Caco-2 (cell line): ENCODE measurements at regions of chr12 and their contacts with region 1.

Region 1: GRCh38 chr12:63843721-63844390 is 644 bp upstream of the SRGAP1 start:
- DNase-seq: peak; percentile 95
- H3K4me3 ChIP-seq: peak overlapping the region; percentile 91
- H3K4me3 Mint-ChIP-seq: peak overlapping the region; percentile 100
- H3K27ac Mint-ChIP-seq: peak overlapping the region; percentile 94
- H3K4me1 ChIP-seq: peaks cover 22% of the 10 kb centered on the region
- H3K4me1 Mint-ChIP-seq: peaks cover 15% of the 10 kb centered on the region
- H3K27me3 ChIP-seq: no peaks in the 10 kb centered on the region
- H3K27me3 Mint-ChIP-seq: no peaks in the 10 kb centered on the region
- CTCF ChIP-seq: peak; percentile 90 to 97

Region 2: GRCh38 chr12:63876980-63877379 is 33.1 kb after region 1 on chr12:
- CTCF ChIA-PET with region 1: no interaction called
- POLR2A ChIA-PET with region 1: no interaction called
- intact Hi-C with region 1: no loop called
- DNase-seq: no peak
- H3K4me3 ChIP-seq: no peak overlapping the region
- H3K4me3 Mint-ChIP-seq: no peak overlapping the region
- H3K27ac Mint-ChIP-seq: no peak overlapping the region
- H3K4me1 ChIP-seq: peaks cover 27% of the 10 kb centered on the region
- H3K4me1 Mint-ChIP-seq: peaks cover 18% of the 10 kb centered on the region
- H3K27me3 ChIP-seq: no peaks in the 10 kb centered on the region
- H3K27me3 Mint-ChIP-seq: no peaks in the 10 kb centered on the region
- CTCF ChIP-seq: no peak

Region 3: DNA sequence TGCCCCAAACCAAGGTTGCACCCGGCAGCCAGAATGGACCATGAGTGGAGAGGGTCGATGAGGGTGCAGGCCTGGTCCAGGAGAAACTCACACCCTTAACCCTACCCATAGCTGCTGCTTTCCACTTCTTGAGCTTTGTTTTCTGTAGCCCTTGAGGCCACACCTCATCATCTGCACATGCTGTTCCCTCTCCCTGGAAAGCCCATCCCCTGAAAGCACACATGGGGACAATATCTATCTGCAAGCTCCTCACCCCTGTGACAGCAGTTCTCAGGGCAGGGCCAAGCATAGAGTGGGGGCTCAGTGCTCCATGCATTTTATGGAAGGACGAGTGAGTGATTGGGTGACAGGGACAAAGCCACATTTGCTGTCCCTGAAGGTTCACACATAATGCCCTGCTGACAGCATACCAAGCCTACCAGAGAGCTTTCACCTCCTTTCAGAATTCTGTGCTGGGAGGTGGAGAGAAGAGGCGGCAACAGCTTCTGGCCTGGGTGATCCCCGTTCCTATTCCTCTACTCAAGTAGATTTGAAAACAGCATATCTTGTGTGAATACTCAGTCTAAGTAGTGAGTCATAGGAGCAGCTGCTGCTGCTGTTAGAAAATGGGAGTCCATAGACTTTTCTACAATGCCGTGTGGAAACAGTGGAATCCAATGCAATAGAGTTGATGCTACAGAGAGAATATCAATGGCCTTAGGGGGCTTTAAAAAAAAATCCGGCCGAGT is 45.2 kb after region 1 on chr12:
- CTCF ChIA-PET with region 1: interaction called, 4 read pairs
- POLR2A ChIA-PET with region 1: no interaction called
- intact Hi-C with region 1: loop called (anchors 1 kb)
- DNase-seq: no peak
- H3K4me3 ChIP-seq: no peak overlapping the region
- H3K4me3 Mint-ChIP-seq: no peak overlapping the region
- H3K27ac Mint-ChIP-seq: peak overlapping the region; percentile 74
- H3K4me1 ChIP-seq: peaks cover 39% of the 10 kb centered on the region
- H3K4me1 Mint-ChIP-seq: peaks cover 43% of the 10 kb centered on the region
- H3K27me3 ChIP-seq: no peaks in the 10 kb centered on the region
- H3K27me3 Mint-ChIP-seq: no peaks in the 10 kb centered on the region
- CTCF ChIP-seq: no peak

Region 4: DNA sequence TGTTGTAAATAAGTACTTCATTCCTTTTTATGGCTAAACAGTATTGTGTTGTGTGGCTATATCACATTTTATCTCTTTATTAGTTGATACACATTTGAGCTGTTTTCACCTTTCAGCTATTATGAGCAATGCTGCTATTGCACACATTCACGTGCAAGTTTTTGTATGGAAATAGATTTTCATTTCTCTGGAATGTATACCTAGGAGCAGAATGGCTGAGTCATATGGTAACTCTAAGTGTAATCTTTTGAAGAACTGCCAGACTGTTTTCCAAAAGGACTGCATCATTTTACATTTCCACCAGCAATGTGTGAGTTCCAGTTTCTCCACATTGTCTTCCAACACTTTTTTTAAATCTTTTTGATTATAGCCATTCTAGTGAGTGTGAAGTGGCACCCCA is 134.7 kb after region 1 on chr12:
- CTCF ChIA-PET with region 1: no interaction called
- POLR2A ChIA-PET with region 1: no interaction called
- intact Hi-C with region 1: loop called (anchors 5 kb)
- DNase-seq: no peak
- H3K4me3 ChIP-seq: no peak overlapping the region
- H3K4me3 Mint-ChIP-seq: no peak overlapping the region
- H3K27ac Mint-ChIP-seq: no peak overlapping the region
- H3K4me1 ChIP-seq: peaks cover 21% of the 10 kb centered on the region
- H3K4me1 Mint-ChIP-seq: peaks cover 11% of the 10 kb centered on the region
- H3K27me3 ChIP-seq: no peaks in the 10 kb centered on the region
- H3K27me3 Mint-ChIP-seq: no peaks in the 10 kb centered on the region
- CTCF ChIP-seq: no peak

Region 5: DNA sequence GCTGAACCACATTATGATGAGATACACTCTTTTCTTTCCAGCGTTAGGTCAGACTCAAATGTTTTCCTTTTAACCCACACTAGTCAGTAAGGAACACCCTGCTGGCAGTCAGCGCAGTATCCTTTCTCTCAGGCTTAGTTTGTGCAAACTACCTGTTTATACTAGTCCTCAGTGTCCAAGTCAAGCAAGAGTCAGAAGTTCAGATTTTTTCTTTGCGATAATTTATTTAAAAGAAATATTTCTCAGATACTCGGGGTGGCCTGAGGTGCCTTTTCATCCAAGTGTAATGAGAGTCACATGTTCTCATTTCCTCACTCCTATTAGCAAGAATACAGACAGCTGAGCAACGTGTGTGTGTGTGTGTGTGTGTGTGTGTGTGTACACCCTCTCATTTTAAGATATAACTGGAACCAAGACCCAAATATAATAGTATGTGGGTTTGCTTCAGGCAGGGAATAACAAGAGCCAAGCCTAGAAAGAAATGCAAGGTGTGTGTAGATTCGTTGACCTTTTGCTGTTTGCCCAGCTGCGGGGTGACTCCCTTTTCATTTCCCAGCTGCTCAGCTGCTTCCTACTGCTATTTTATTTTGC is 195.5 kb after region 1 on chr12:
- CTCF ChIA-PET with region 1: no interaction called
- POLR2A ChIA-PET with region 1: no interaction called
- intact Hi-C with region 1: loop called (anchors 1 kb)
- DNase-seq: peak; percentile 42 to 52
- H3K4me3 ChIP-seq: no peak overlapping the region
- H3K4me3 Mint-ChIP-seq: peak overlapping the region; percentile 9
- H3K27ac Mint-ChIP-seq: peak overlapping the region; percentile 24
- H3K4me1 ChIP-seq: peaks cover 48% of the 10 kb centered on the region
- H3K4me1 Mint-ChIP-seq: peaks cover 38% of the 10 kb centered on the region
- H3K27me3 ChIP-seq: no peaks in the 10 kb centered on the region
- H3K27me3 Mint-ChIP-seq: no peaks in the 10 kb centered on the region
- CTCF ChIP-seq: no peak

Region 6: DNA sequence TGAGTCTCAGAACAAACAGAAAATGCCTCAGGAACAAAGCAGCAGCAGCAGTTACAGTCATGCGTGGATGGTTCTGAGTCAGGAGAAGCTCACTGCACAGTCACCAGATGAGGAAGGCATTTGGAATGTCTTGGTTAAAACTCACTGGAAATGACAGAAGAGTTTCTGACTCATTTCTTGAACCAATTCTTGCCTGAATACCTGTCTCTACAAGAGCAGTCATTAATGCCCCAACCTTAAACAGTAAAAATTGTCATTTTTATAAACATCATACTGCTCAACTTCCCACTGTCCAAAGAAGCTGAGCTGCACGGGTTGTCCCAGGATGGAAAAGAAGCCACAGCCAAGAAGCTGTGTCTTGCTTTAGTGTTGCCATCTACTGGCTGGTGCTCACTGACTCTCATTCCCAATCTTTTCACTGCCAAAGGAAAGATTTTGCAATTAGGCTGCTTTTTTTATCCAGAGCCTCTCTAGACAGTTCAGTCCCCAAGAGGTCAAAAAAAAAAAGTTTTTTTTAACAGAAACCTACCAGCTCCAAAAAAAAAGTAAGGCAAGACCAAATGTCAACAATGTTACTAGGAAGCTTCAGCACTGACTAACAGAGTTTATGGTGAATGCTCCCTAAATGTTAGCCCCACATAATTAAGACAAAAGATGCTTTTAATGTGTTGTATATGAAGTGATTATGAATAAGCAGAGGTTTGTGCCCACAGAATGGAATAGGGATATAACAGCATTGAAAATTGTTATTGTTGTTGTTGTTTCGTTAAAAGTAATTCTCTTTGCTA is 337.8 kb after region 1 on chr12:
- CTCF ChIA-PET with region 1: interaction called, 23 read pairs
- POLR2A ChIA-PET with region 1: no interaction called
- intact Hi-C with region 1: loop called (anchors 1 kb)
- DNase-seq: peak; percentile 53 to 58
- H3K4me3 ChIP-seq: no peak overlapping the region
- H3K4me3 Mint-ChIP-seq: no peak overlapping the region
- H3K27ac Mint-ChIP-seq: peak overlapping the region; percentile 55
- H3K4me1 ChIP-seq: peaks cover 35% of the 10 kb centered on the region
- H3K4me1 Mint-ChIP-seq: peaks cover 34% of the 10 kb centered on the region
- H3K27me3 ChIP-seq: no peaks in the 10 kb centered on the region
- H3K27me3 Mint-ChIP-seq: no peaks in the 10 kb centered on the region
- CTCF ChIP-seq: peak; percentile 59 to 67

Region 7: DNA sequence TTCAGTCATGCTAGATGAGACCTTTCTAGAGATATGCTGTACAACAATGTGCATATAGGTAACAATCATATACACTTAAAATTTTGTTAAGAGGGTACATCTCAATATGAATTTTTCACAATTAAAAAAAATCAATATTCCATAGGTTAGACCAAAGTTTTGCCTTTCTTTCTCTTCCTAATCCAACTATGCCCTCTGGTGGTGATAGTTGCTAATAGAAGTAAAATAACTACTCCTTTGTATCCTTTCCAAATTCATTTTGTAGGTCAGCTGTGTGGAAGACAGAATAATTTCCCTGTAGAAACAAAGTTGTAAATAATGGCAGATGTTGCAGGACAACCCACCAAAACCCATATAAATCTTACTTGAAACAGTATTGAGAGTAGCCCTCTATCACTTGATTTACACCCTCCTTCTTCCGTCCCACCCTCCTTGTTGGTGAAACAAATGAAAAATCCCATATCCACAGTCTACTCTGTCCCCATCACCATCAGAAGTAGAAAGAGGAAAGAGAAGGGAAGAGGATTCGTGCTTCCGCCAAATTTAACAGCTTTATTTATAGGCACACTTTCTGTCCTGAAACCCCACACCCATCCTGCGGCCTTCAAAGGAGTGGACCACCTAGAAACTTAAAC is 412.4 kb after region 1 on chr12:
- CTCF ChIA-PET with region 1: interaction called, 6 read pairs
- POLR2A ChIA-PET with region 1: interaction called, 4 read pairs
- intact Hi-C with region 1: loop called (anchors 1 kb)
- DNase-seq: peak in 1 of 2 experiments; percentile 64
- H3K4me3 ChIP-seq: no peak overlapping the region
- H3K4me3 Mint-ChIP-seq: no peak overlapping the region
- H3K27ac Mint-ChIP-seq: no peak overlapping the region
- H3K4me1 ChIP-seq: no peaks in the 10 kb centered on the region
- H3K4me1 Mint-ChIP-seq: no peaks in the 10 kb centered on the region
- H3K27me3 ChIP-seq: no peaks in the 10 kb centered on the region
- H3K27me3 Mint-ChIP-seq: no peaks in the 10 kb centered on the region
- CTCF ChIP-seq: peak; percentile 58 to 67